ENCODE measurements at regions of chr22 and their contacts with region 1.

Region 1: DNA sequence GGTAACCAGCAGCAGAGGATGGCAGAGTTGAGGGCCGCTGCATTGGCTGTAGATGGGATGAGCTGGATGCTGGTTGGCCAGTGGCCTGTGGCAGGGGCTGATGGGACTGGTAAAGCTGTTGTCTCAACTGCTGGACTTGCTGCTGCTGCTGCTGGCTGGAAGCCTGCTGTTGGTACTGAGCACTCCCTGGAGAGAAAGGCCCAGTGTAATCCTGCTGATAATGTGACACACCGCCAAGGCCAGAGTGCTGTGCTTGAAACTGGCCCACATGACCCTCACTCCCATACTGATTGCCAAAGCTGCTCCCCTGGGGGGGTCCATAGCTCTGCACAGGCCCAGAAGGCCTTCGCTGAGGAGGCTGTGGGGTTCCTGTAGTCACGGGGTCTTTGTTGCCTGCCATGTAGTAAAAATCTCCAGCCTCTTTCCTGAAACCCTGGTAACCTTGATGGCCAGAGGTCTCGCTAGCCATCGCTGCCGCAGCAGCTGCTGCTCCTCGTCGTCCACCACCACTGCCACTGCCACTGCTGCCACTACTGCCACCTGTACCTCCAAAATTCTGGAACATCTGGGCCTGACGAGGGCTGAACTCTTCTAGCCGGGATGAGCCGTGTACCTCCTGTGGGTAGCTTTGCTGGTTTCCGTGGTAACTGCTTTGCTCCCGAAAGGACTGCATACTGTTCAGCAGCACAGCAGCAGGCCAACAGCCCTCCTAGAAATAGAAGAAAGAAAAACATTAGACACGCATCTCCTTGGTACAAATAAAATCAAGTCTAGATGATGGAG is 55.6 kb downstream of the TCF20 start:
- DNase-seq: peak; percentile 50 to 87 (median 84)
- H3K4me3 ChIP-seq: no peak overlapping the region
- H3K27ac ChIP-seq: peak overlapping the region in 3 of 5 donors; percentile 57 to 79 (median 76)
- H3K4me1 ChIP-seq: peaks cover 10 to 31% of the 10 kb centered on the region in 2 donors
- H3K27me3 ChIP-seq: no peaks in the 10 kb centered on the region
- CTCF ChIP-seq: no peak
- POLR2A ChIP-seq: peak in 1 of 2 donors; percentile 23

Region 2: GRCh38 chr22:42247596-42247995 is 32.8 kb after region 1 on chr22:
- intact Hi-C with region 1: loop called in 1 of 2 experiments (anchors 2 kb)
- DNase-seq: no peak
- H3K4me3 ChIP-seq: no peak overlapping the region
- H3K27ac ChIP-seq: no peak overlapping the region
- H3K4me1 ChIP-seq: peaks cover 0 to 13% of the 10 kb centered on the region in 2 donors
- H3K27me3 ChIP-seq: no peaks in the 10 kb centered on the region
- CTCF ChIP-seq: no peak
- POLR2A ChIP-seq: no peak

Measured in adrenal gland (tissue), 19 donors.